PC-3 (cell line): ENCODE measurements at regions of chr9 and their contacts with region 1.

Region 1: DNA sequence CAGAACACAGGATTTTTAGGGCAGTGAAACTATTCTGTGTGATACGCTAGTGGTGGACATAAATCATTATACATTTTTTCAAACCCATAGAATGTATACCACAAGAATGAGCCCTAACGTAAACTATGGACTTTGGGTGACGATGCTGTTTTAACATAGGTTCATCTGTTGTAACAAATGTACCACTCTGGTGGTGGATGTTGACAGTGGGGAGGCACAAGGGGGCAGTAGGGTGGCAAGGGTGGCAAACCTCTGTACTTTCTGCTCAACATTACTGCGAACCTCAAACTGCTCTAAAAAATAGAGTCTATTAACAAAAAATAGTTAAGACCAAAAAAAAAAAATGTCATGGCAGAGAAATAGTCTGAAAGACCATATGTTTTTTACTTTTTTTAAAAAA is 9.1 kb upstream of the MVB12B start:
- DNase-seq: peak; percentile 41
- ATAC-seq: peak; percentile 55; the same call in 1 of the 2 replicates
- H3K4me3 ChIP-seq: no peak overlapping the region
- H3K27ac ChIP-seq: no peak overlapping the region
- H3K4me1 ChIP-seq: no peaks in the 10 kb centered on the region
- H3K27me3 ChIP-seq: no peaks in the 10 kb centered on the region
- CTCF ChIP-seq: peak; percentile 60

Region 2: GRCh38 chr9:126386088-126386487 is 68.6 kb after region 1 on chr9:
- CTCF ChIA-PET with region 1: no interaction called
- POLR2A ChIA-PET with region 1: no interaction called
- intact Hi-C with region 1: loop called (anchors 1 kb)
- DNase-seq: peak; percentile 43
- ATAC-seq: peak; percentile 75
- H3K4me3 ChIP-seq: no peak overlapping the region
- H3K27ac ChIP-seq: no peak overlapping the region
- H3K4me1 ChIP-seq: peaks cover 30% of the 10 kb centered on the region
- H3K27me3 ChIP-seq: no peaks in the 10 kb centered on the region
- CTCF ChIP-seq: peak; percentile 61

Region 3: DNA sequence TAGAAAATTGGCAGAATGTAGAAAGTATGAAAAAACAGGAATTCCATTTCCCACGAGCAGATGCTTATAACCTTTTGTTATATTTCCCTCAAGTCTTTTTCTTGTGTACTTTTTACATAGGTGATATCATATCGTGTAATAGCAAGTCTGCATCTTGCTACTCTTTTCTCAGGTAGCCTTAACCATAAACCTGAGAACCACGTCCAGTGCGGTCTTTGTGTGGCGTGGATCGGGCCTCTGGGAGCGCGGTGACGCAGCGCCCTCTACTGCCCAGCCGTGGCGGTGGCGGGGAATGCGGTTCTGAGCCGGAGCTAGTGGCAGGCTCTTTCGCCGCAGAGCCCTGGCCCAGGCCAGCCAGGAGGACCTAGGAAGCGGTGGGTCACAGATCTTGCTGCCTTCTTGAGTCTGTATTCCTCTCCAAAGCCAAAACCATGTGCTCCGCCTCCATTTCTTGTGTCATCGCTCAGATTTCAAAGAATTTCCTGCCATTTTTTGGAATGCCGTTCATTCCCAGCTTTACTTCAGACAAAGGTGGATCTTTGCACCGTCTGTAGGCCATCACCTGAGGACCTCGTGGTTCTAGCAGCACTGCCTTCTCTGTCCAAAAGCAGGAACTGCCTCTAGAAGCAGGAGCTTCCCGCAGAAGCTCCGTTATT is 81.0 kb after region 1 on chr9:
- CTCF ChIA-PET with region 1: interaction called, 4 read pairs
- POLR2A ChIA-PET with region 1: no interaction called
- intact Hi-C with region 1: loop called (anchors 1 kb)
- DNase-seq: peak; percentile 66
- ATAC-seq: peak; percentile 87
- H3K4me3 ChIP-seq: no peak overlapping the region
- H3K27ac ChIP-seq: no peak overlapping the region
- H3K4me1 ChIP-seq: peaks cover 17% of the 10 kb centered on the region
- H3K27me3 ChIP-seq: no peaks in the 10 kb centered on the region
- CTCF ChIP-seq: peak; percentile 89

Region 4: DNA sequence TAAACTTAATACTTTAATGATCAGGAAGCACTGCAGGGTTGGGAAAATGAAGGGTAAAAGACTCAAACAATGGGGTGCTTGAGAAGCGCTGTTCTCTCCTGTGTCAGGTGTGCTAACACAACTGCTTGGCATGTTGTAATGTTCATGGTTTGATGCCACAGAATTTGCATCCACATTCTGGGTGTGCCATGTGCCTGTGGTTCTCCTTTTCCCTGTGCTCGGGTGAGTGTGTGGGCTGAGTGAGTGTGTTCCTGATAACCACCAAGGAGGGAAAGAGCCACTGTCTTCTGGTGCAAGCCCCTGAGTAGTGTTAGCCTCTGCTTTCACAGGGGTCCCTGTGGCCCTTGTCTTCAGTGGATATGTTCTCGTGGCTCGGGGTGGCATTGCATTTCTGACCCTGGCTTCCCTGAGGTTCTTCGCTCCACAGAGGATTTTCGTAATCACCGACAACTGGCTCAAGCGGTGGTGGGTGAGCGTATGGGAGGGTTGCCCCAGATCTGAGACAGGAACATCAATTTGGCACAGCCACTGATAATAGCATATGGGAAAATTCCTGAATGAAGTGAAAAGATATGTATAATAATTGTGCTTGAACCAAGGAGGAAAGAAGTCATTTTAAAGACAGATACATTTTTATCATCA is 111.1 kb after region 1 on chr9:
- CTCF ChIA-PET with region 1: no interaction called
- POLR2A ChIA-PET with region 1: no interaction called
- intact Hi-C with region 1: no loop called
- DNase-seq: no peak
- ATAC-seq: no peak
- H3K4me3 ChIP-seq: no peak overlapping the region
- H3K27ac ChIP-seq: no peak overlapping the region
- H3K4me1 ChIP-seq: no peaks in the 10 kb centered on the region
- H3K27me3 ChIP-seq: no peaks in the 10 kb centered on the region
- CTCF ChIP-seq: no peak

Region 5: GRCh38 chr9:126514047-126514821 is 196.7 kb after region 1 on chr9:
- CTCF ChIA-PET with region 1: no interaction called
- POLR2A ChIA-PET with region 1: no interaction called
- intact Hi-C with region 1: no loop called
- DNase-seq: peak; percentile 30
- ATAC-seq: peak; percentile 37; the same call in 1 of the 2 replicates
- H3K4me3 ChIP-seq: no peak overlapping the region
- H3K27ac ChIP-seq: no peak overlapping the region
- H3K4me1 ChIP-seq: peaks cover 20% of the 10 kb centered on the region
- H3K27me3 ChIP-seq: peaks cover 19% of the 10 kb centered on the region
- CTCF ChIP-seq: peak; percentile 44; the same call in 1 of the 2 replicates